ENCODE measurements at regions of chr15 and their contacts with region 1.

Region 1: DNA sequence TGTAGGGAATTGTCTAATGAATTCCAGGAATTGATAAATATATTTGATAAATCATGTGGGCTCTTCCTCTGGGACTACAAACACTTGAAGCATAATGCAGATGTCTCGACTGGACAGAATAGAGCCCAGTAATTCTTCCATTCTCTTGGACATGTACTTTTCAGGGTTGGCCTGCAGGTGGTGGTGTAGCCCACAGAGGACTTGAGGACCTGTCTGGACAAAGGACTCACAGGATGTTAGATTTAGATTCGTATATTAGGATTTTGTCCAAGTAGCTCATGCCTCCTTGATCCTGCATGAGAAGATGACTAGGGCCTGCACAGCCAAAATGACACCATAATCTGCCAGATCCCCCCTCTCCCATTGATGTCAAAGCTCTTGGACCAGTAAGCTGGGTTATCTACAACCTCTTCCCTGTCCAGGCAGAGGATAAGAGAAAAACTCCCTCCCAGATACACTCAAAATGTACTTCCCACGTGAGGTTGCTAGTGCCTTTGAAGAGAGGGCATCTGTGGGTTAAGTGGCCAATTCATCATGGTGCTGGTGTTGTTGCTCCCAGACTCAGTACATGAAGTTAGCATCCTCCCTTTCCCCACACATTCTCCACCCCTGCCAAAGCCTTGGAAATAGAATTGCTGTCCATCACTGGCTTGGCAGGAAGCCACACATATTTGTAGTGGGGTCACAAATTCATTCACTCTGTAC is 88.6 kb upstream of the ZNF280D start:
- DNase-seq: peak in 8 of 10 donors; percentile 15 to 74 (median 54)
- H3K4me3 ChIP-seq: no peak overlapping the region
- H3K27ac ChIP-seq: no peak overlapping the region
- H3K27me3 ChIP-seq: no peaks in the 10 kb centered on the region
- CTCF ChIP-seq: peak in 55 of 56 donors; percentile 35 to 91 (median 67)

Region 2: GRCh38 chr15:56786966-56787365 is 34.9 kb before region 1 on chr15:
- intact Hi-C with region 1: no loop called
- DNase-seq: no peak
- H3K4me3 ChIP-seq: no peak overlapping the region
- H3K27ac ChIP-seq: no peak overlapping the region
- H3K27me3 ChIP-seq: no peaks in the 10 kb centered on the region
- CTCF ChIP-seq: no peak

Region 3: DNA sequence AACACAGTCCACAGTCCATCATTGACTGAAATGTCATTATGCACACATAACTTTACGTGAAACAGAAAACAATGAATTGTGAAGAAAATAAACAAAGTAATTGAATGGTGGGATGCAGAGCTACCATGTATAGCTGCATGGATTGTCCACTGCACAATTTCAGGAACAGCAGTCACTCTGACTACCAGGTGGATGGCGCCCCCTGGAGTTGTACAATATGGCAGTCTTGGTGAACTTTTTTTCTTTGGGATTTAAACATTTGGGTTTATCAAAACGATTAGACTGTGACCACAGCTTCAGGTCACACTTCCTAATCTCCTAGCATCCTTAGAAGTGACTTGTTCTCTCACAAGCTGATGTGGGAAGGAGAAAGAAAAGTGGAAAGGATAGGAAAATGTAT is 47.7 kb after region 1 on chr15:
- intact Hi-C with region 1: loop called in 1 of 2 experiments (anchors 5 kb)
- DNase-seq: peak in 9 of 10 donors; percentile 12 to 75 (median 48)
- H3K4me3 ChIP-seq: no peak overlapping the region
- H3K27ac ChIP-seq: peak overlapping the region in 1 of 59 donors; percentile 2
- H3K27me3 ChIP-seq: no peaks in the 10 kb centered on the region
- CTCF ChIP-seq: peak; percentile 51 to 82 (median 70)

Region 4: DNA sequence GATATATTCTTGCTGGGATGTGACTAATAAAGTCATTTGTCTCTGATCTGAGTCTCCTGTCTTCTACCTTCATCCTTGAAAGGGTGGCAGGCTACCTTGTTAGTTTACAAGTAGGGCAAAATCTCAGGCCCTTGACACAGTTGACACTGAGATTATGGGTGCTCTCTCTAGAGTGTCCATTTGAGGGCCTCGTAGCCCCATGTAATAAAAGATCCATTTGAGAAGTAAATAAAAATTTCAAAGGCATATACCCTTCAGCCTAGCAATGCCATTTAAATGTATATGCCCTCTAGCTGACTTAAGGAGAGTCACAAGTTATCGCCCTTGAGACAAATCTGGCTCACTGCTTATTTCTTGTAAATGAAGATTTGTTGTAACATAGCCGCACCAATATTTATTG is 195.2 kb after region 1 on chr15:
- intact Hi-C with region 1: loop called in 1 of 2 experiments (anchors 10 kb)
- DNase-seq: no peak
- H3K4me3 ChIP-seq: no peak overlapping the region
- H3K27ac ChIP-seq: peak overlapping the region in 49 of 59 donors; percentile 4 to 83 (median 56)
- H3K27me3 ChIP-seq: no peaks in the 10 kb centered on the region
- CTCF ChIP-seq: peak in 47 of 56 donors; percentile 10 to 72 (median 45)

Region 5: GRCh38 chr15:57213862-57214261 is 392.0 kb after region 1 on chr15:
- intact Hi-C with region 1: loop called in 1 of 2 experiments (anchors 5 kb)
- DNase-seq: no peak
- H3K4me3 ChIP-seq: peak overlapping the region in 12 of 59 donors; percentile 4 to 34 (median 18)
- H3K27ac ChIP-seq: peak overlapping the region in 38 of 59 donors; percentile 5 to 70 (median 38)
- H3K27me3 ChIP-seq: no peaks in the 10 kb centered on the region
- CTCF ChIP-seq: peak; percentile 22 to 80 (median 63)

Measured in dorsolateral prefrontal cortex (tissue), 120 donors.